MCF 10A (cell line): ENCODE measurements at regions of chr17 and their contacts with region 1.

Region 1: GRCh38 chr17:75764711-75765421 is at the start of gene GALK1:
- DNase-seq: peak; percentile 69
- H3K4me3 Mint-ChIP-seq: peak within 1 kb of the TSS; percentile 69
- H3K27ac Mint-ChIP-seq: peak within 1 kb of the TSS; percentile 35
- H3K4me1 Mint-ChIP-seq: peaks cover 15% of the 10 kb centered on the region
- H3K27me3 Mint-ChIP-seq: no peaks in the 10 kb centered on the region
- CTCF ChIP-seq: peak; percentile 53
- total RNA-seq, gene GALK1: 8.7 and 9.8 TPM in 2 replicates

Region 2: GRCh38 chr17:75673487-75673886 is 91.4 kb before region 1 on chr17:
- CTCF ChIA-PET with region 1: interaction called, 5 read pairs
- POLR2A ChIA-PET with region 1: interaction called, 30 read pairs
- intact Hi-C with region 1: no loop called
- DNase-seq: no peak
- H3K4me3 Mint-ChIP-seq: no peak overlapping the region
- H3K27ac Mint-ChIP-seq: no peak overlapping the region
- H3K4me1 Mint-ChIP-seq: peaks cover 2% of the 10 kb centered on the region
- H3K27me3 Mint-ChIP-seq: no peaks in the 10 kb centered on the region
- CTCF ChIP-seq: no peak

Region 3: GRCh38 chr17:75679706-75680442 is 85.0 kb before region 1 on chr17:
- CTCF ChIA-PET with region 1: interaction called, 5 read pairs
- POLR2A ChIA-PET with region 1: interaction called, 30 read pairs
- intact Hi-C with region 1: no loop called
- DNase-seq: peak; percentile 92
- H3K4me3 Mint-ChIP-seq: peak overlapping the region; percentile 60
- H3K27ac Mint-ChIP-seq: peak overlapping the region; percentile 91
- H3K4me1 Mint-ChIP-seq: peaks cover 40% of the 10 kb centered on the region
- H3K27me3 Mint-ChIP-seq: no peaks in the 10 kb centered on the region
- CTCF ChIP-seq: peak; percentile 60

Region 4: DNA sequence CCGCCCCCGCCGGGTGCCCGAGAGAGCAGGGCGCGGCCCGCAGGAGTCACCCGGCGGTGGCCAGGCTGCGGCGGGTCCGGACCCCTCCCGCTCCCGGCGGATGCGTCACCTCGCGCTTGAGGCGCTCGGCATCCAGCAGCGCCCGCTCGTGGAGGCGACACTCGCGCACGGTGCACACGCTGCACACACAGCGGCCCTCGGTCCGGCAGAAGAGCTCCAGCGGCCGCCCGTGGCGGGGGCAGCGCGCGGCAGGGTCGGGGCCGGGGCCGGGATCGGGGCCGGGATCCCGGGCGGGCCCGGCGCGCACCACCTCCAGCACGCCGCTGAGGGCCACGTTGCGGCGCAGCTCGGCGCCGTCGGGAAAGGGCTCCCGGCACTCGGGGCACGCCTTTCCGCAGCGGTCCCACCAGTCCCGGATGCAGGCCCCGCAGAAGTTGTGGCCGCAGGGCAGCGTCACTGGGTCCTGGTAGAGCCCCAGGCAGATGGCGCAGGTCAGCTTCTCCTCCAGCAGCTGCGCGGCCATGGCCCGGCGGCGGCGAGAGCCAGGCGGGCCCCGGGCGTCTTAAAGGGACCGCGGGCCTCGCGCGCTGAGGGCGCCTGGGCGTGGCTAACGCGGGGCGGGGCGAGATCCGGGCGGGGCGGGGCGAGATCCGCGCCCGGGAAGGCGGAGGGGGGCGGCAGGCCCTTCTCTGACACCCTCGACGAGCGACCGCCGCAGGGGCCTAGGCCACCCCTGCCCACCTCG is 131.7 kb after region 1 on chr17 and contains the start of gene TRIM65:
- CTCF ChIA-PET with region 1: interaction called, 6 read pairs
- POLR2A ChIA-PET with region 1: interaction called, 5 read pairs
- intact Hi-C with region 1: loop called (anchors 1 kb)
- DNase-seq: peak; percentile 71
- H3K4me3 Mint-ChIP-seq: peak within 1 kb of the TSS; percentile 74
- H3K27ac Mint-ChIP-seq: peak within 1 kb of the TSS; percentile 70
- H3K4me1 Mint-ChIP-seq: peaks cover 19% of the 10 kb centered on the region
- H3K27me3 Mint-ChIP-seq: no peaks in the 10 kb centered on the region
- CTCF ChIP-seq: peak; percentile 14
- total RNA-seq, gene TRIM65: 15.9 and 17.4 TPM in 2 replicates

Region 5: DNA sequence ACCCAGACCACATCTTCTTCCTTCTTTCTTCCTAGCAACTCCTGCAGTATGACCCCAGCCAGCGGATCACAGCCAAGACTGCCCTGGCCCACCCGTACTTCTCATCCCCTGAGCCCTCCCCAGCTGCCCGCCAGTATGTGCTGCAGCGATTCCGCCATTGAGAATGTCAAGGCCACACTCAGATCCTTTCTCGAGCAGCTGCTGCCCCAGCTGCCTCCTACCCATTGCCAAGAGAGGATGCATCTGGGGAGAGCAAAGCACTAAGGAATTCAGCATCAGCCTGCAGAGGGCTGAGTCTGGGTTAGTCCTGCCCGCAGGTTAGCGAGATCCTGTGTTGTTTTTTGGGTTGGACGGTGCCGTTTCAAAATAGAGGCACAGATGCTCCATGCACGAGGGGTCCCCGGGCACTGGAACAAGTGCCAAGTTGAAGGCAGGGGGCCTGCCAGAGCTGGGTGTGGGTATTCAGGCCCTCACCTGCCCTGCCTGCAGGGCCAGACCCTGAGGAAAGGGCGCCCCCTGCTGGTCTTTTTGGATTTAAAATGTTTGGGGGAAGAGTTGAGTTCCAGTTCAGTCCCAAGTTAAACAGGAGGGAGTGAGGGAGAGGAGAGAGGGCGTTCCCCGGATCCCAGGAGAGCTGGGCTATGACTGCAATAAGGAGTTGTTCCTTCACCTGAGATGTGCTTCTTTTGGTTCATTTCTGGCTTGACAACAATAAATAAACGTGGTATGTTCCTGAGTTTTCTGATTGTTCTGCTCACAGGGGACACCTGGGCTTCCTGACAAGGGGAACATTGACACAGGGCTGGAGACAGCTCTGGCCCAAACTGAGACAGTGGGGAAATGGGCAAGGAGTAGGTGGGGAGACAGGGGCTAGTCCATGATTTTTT is 240.6 kb after region 1 on chr17:
- CTCF ChIA-PET with region 1: no interaction called
- POLR2A ChIA-PET with region 1: no interaction called
- intact Hi-C with region 1: loop called (anchors 5 kb)
- DNase-seq: peak; percentile 75
- H3K4me3 Mint-ChIP-seq: no peak overlapping the region
- H3K27ac Mint-ChIP-seq: no peak overlapping the region
- H3K4me1 Mint-ChIP-seq: peaks cover 6% of the 10 kb centered on the region
- H3K27me3 Mint-ChIP-seq: no peaks in the 10 kb centered on the region
- CTCF ChIP-seq: peak; percentile 72

Region 6: GRCh38 chr17:76079956-76080767 is 315.3 kb after region 1 on chr17:
- CTCF ChIA-PET with region 1: no interaction called
- POLR2A ChIA-PET with region 1: no interaction called
- intact Hi-C with region 1: no loop called
- DNase-seq: no peak
- H3K4me3 Mint-ChIP-seq: no peak overlapping the region
- H3K27ac Mint-ChIP-seq: no peak overlapping the region
- H3K4me1 Mint-ChIP-seq: peaks cover under 1% of the 10 kb centered on the region
- H3K27me3 Mint-ChIP-seq: peaks cover 45% of the 10 kb centered on the region
- CTCF ChIP-seq: no peak